B cell (primary cell): ENCODE measurements at regions of chrX and their contacts with region 1.

Region 1: DNA sequence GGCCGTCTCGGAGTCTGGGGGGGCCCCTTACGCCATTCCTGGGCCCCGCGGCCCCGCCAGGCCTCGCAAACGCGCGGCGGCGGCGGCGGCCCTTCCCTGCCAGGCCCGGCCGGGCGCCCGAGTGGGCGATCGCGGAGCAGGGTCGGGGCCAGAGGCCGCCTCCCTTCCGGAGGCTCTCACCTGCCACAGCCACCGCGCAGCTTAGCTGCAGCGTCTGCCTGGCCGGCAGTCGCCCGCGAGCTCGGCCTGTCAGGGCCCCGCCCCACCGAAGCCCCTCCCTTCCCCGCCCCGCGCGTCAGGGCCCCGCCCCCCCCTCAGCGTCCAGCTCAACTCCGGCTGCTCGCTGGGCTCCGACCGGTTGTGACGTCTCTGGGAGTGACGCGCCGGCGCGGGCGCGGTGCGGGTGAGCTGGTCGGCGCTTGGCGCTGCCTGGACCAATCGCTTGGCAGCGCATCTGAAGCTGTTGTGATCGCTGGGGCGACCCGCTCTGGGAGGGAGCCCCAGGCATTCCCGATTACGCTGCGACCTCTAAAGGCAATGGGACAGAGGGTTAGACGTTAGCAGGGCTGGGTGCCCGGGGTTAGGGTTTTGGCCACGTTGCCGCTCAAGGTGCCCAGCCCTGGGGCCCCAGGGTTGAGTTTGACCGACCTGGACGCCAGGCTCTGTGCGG is at the start of gene SLC10A3:
- DNase-seq: peak; percentile 91
- ATAC-seq: peak; percentile 79
- H3K4me3 ChIP-seq: peak within 1 kb of the TSS; percentile 42 to 67 (median 61)
- H3K4me3 Mint-ChIP-seq: peak within 1 kb of the TSS; percentile 89
- H3K27ac ChIP-seq: peak within 1 kb of the TSS; percentile 84
- H3K27ac Mint-ChIP-seq: peak within 1 kb of the TSS; percentile 95
- H3K4me1 ChIP-seq: peaks cover 2 to 34% of the 10 kb centered on the region in 2 donors
- H3K4me1 Mint-ChIP-seq: peaks cover 17% of the 10 kb centered on the region
- H3K27me3 ChIP-seq: no peaks in the 10 kb centered on the region
- H3K27me3 Mint-ChIP-seq: no peaks in the 10 kb centered on the region
- CTCF ChIP-seq: no peak
- total RNA-seq, gene SLC10A3: 16.7 and 17.9 TPM in 2 replicates

Region 2: DNA sequence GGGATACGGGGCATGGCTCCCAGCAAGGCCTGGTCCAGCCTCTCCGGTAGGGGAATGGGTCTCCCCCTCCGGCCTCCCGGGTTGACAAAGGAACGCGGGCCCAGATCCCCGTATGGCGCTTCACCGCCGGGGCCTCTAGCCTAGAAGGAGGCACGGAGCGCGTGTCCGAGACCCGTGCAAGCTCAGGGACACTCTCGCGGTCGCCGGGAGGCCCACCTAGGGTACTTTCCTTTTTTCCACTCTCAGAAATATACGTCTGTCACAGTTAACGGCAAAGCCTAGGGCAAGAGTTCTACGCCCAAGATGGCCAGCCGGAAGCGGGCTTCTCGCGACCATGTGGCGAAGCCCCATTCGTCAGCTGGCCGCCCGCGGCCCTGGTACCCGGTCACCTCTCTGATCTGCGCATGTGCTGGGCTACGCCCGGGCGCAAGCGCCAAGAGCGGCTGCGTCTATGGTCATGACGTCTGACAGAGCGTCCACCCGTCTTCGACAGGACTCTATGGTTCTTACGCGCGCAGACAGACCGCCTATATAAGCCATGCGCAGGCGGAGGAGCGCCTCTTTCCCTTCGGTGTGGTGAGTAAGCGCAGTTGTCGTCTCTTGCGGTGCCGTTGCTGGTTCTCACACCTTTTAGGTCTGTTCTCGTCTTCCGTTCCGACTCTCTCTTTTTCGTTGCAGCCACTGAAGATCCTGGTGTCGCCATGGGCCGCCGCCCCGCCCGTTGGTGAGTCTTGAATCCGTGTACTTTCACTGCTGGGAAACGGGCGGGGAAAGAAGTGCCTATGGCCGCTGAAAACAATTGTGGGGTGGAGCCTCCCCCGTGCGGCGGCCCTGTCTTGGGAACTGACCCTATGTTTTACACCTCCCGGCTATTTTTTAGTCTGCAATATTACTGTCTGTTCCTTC is 92.5 kb before region 1 on chrX and contains the start of gene RPL10:
- CTCF ChIA-PET with region 1: interaction called, 11 read pairs
- POLR2A ChIA-PET with region 1: interaction called, 11 read pairs
- intact Hi-C with region 1: loop called (anchors 5 kb)
- DNase-seq: peak; percentile 94
- ATAC-seq: peak; percentile 76
- H3K4me3 ChIP-seq: peak within 1 kb of the TSS; percentile 63 to 96 (median 78)
- H3K4me3 Mint-ChIP-seq: peak within 1 kb of the TSS; percentile 99
- H3K27ac ChIP-seq: peak within 1 kb of the TSS; percentile 99 to 100
- H3K27ac Mint-ChIP-seq: peak within 1 kb of the TSS; percentile 99
- H3K4me1 ChIP-seq: peaks cover 12 to 20% of the 10 kb centered on the region in 2 donors
- H3K4me1 Mint-ChIP-seq: peaks cover 17% of the 10 kb centered on the region
- H3K27me3 ChIP-seq: no peaks in the 10 kb centered on the region
- H3K27me3 Mint-ChIP-seq: no peaks in the 10 kb centered on the region
- CTCF ChIP-seq: no peak
- total RNA-seq, gene RPL10: 3,946 and 4,073 TPM in 2 replicates

Region 3: DNA sequence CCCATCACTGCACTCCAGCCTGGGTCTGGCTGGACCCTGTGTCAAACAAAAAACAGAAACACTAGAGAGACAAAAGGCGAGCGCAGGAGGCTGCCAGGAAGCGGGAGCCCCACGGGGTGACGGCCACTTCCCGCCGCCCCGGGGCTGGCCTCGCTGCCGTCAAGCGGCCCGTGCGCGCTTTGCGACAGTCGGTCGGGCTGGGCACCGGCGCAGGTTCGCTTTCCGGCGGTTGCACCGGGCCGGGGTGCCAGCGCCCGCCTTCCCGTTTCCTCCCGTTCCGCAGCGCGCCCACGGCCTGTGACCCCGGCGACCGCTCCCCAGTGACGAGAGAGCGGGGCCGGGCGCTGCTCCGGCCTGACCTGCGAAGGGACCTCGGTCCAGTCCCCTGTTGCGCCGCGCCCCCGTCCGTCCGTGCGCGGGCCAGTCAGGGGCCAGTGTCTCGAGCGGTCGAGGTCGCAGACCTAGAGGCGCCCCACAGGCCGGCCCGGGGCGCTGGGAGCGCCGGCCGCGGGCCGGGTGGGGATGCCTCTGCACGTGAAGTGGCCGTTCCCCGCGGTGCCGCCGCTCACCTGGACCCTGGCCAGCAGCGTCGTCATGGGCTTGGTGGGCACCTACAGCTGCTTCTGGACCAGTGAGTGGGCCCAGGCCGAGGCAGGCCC is 79.1 kb before region 1 on chrX and contains the start of gene TAFAZZIN:
- CTCF ChIA-PET with region 1: interaction called, 7 read pairs
- POLR2A ChIA-PET with region 1: interaction called, 6 read pairs
- intact Hi-C with region 1: loop called (anchors 2 kb)
- DNase-seq: peak; percentile 77
- ATAC-seq: peak; percentile 66
- H3K4me3 ChIP-seq: peak within 1 kb of the TSS in 4 of 5 experiments; percentile 59 to 79 (median 70)
- H3K4me3 Mint-ChIP-seq: peak within 1 kb of the TSS; percentile 90
- H3K27ac ChIP-seq: peak within 1 kb of the TSS; percentile 73 to 79
- H3K27ac Mint-ChIP-seq: peak within 1 kb of the TSS; percentile 90
- H3K4me1 ChIP-seq: peaks cover 8 to 38% of the 10 kb centered on the region in 2 donors
- H3K4me1 Mint-ChIP-seq: peaks cover 31% of the 10 kb centered on the region
- H3K27me3 ChIP-seq: no peaks in the 10 kb centered on the region
- H3K27me3 Mint-ChIP-seq: no peaks in the 10 kb centered on the region
- CTCF ChIP-seq: no peak
- total RNA-seq, gene TAFAZZIN: 117 and 118 TPM in 2 replicates

Region 4: GRCh38 chrX:154458114-154458953 is 32.2 kb before region 1 on chrX and contains the start of gene PLXNA3:
- CTCF ChIA-PET with region 1: interaction called, 8 read pairs
- POLR2A ChIA-PET with region 1: interaction called, 3 read pairs
- intact Hi-C with region 1: loop called (anchors 5 kb)
- DNase-seq: peak; percentile 86
- ATAC-seq: peak; percentile 79
- H3K4me3 ChIP-seq: peak within 1 kb of the TSS; percentile 23 to 69 (median 61)
- H3K4me3 Mint-ChIP-seq: peak within 1 kb of the TSS; percentile 95
- H3K27ac ChIP-seq: peak within 1 kb of the TSS; percentile 24 to 66
- H3K27ac Mint-ChIP-seq: peak within 1 kb of the TSS; percentile 96
- H3K4me1 ChIP-seq: peaks cover 6 to 18% of the 10 kb centered on the region in 2 donors
- H3K4me1 Mint-ChIP-seq: peaks cover 14% of the 10 kb centered on the region
- H3K27me3 ChIP-seq: no peaks in the 10 kb centered on the region
- H3K27me3 Mint-ChIP-seq: no peaks in the 10 kb centered on the region
- CTCF ChIP-seq: no peak
- total RNA-seq, gene PLXNA3: 114 and 120 TPM in 2 replicates

Region 5: GRCh38 chrX:154478728-154479622 is 11.6 kb before region 1 on chrX and contains the start of gene LAGE3:
- CTCF ChIA-PET with region 1: no interaction called
- POLR2A ChIA-PET with region 1: interaction called, 5 read pairs
- intact Hi-C with region 1: loop called (anchors 1 kb)
- DNase-seq: peak; percentile 94
- ATAC-seq: peak; percentile 88
- H3K4me3 ChIP-seq: peak within 1 kb of the TSS in 4 of 5 experiments; percentile 51 to 59 (median 54)
- H3K4me3 Mint-ChIP-seq: peak within 1 kb of the TSS; percentile 88
- H3K27ac ChIP-seq: peak within 1 kb of the TSS; percentile 75 to 84
- H3K27ac Mint-ChIP-seq: peak within 1 kb of the TSS; percentile 94
- H3K4me1 ChIP-seq: peaks cover 5 to 16% of the 10 kb centered on the region in 2 donors
- H3K4me1 Mint-ChIP-seq: peaks cover 19% of the 10 kb centered on the region
- H3K27me3 ChIP-seq: no peaks in the 10 kb centered on the region
- H3K27me3 Mint-ChIP-seq: no peaks in the 10 kb centered on the region
- CTCF ChIP-seq: no peak
- total RNA-seq, gene LAGE3: 17.0 and 19.3 TPM in 2 replicates

Region 6: GRCh38 chrX:154515878-154516655 is 25.5 kb after region 1 on chrX and contains the start of gene FAM3A:
- CTCF ChIA-PET with region 1: interaction called, 6 read pairs
- POLR2A ChIA-PET with region 1: interaction called, 13 read pairs
- intact Hi-C with region 1: loop called (anchors 1 kb)
- DNase-seq: peak; percentile 89
- ATAC-seq: peak; percentile 97
- H3K4me3 ChIP-seq: peak within 1 kb of the TSS; percentile 36 to 75 (median 67)
- H3K4me3 Mint-ChIP-seq: peak within 1 kb of the TSS; percentile 89
- H3K27ac ChIP-seq: peak within 1 kb of the TSS; percentile 71 to 73
- H3K27ac Mint-ChIP-seq: peak within 1 kb of the TSS; percentile 94
- H3K4me1 ChIP-seq: peaks cover 4 to 22% of the 10 kb centered on the region in 2 donors
- H3K4me1 Mint-ChIP-seq: peaks cover 18% of the 10 kb centered on the region
- H3K27me3 ChIP-seq: no peaks in the 10 kb centered on the region
- H3K27me3 Mint-ChIP-seq: no peaks in the 10 kb centered on the region
- CTCF ChIP-seq: no peak
- total RNA-seq, gene FAM3A: 39.6 and 43.3 TPM in 2 replicates

Region 7: GRCh38 chrX:154526901-154527675 is 36.5 kb after region 1 on chrX:
- CTCF ChIA-PET with region 1: interaction called, 12 read pairs
- POLR2A ChIA-PET with region 1: interaction called, 5 read pairs
- intact Hi-C with region 1: no loop called
- DNase-seq: peak; percentile 77
- ATAC-seq: peak; percentile 92
- H3K4me3 ChIP-seq: peak overlapping the region in 4 of 5 experiments; percentile 28 to 52 (median 36)
- H3K4me3 Mint-ChIP-seq: peak overlapping the region; percentile 74
- H3K27ac ChIP-seq: peak overlapping the region; percentile 55 to 64
- H3K27ac Mint-ChIP-seq: peak overlapping the region; percentile 82
- H3K4me1 ChIP-seq: peaks cover 8 to 13% of the 10 kb centered on the region in 2 donors
- H3K4me1 Mint-ChIP-seq: peaks cover 11% of the 10 kb centered on the region
- H3K27me3 ChIP-seq: no peaks in the 10 kb centered on the region
- H3K27me3 Mint-ChIP-seq: no peaks in the 10 kb centered on the region
- CTCF ChIP-seq: peak; percentile 53